Lower leg skin (tissue), 4 donors: ENCODE measurements at regions of chr2 and their contacts with region 1.

Region 1: DNA sequence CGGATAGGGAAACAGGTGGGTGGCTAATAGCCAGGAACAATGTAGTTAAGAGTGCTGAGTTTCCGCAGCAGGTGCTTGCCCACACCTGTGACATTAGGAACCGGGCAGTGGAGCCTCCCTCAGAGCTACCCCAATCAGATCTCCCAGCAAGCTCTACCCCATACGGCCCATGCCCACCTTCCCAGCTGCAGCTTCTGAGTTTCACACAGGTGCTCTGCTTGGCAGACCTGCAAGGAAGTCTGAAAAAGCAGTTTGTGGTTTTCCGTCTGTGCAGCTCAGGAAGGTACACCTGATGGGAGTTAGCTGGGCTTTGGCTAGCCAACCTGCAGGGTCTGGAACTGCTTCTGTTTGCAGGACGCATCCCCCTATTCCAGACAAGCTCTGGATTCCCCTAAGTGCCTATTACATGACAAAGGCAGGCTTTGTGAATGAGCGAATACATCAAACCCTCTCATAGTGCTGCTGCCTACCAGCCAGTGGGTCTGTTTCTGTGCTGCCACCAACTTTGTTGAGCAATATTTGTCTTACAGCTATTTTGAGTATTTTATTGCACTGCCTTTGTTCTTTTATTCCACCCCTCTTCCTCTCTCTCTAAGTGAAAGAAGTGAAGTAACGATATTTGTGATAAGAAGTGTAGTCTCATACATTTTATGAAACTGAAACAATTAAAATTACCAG is 24.7 kb upstream of the CEP68 start:
- DNase-seq: no peak
- H3K4me3 ChIP-seq: no peak overlapping the region
- CTCF ChIP-seq: no peak
- POLR2A ChIP-seq: no peak

Region 2: GRCh38 chr2:64439194-64439593 is 592.3 kb before region 1 on chr2:
- intact Hi-C with region 1: no loop called
- DNase-seq: no peak
- H3K4me3 ChIP-seq: no peak overlapping the region
- CTCF ChIP-seq: no peak
- POLR2A ChIP-seq: no peak

Region 3: DNA sequence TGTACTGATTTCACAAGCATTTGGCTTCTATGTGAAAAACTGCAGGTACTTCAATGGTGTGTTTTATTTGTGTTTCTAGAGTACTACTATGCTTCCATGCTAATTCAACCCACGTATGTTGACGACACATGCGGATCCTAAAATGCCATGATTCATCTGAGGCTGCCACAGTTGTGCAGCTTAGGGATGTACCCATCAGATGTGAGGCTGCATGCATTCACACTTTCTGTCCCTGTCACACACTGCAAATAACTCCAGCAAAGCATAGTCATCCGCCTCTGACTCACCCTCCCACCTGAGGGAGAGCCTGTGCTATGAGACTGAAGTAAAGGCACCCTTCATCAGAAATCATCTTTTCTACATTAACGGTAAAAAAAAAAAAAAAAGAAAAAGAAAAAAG is 355.6 kb before region 1 on chr2:
- intact Hi-C with region 1: loop called (anchors 10 kb)
- DNase-seq: no peak
- H3K4me3 ChIP-seq: no peak overlapping the region
- CTCF ChIP-seq: no peak
- POLR2A ChIP-seq: no peak

Region 4: GRCh38 chr2:65204461-65205210 is 173.2 kb after region 1 on chr2:
- intact Hi-C with region 1: no loop called
- DNase-seq: no peak
- H3K4me3 ChIP-seq: no peak overlapping the region
- CTCF ChIP-seq: no peak
- POLR2A ChIP-seq: no peak